HepG2 (cell line): ENCODE measurements at regions of chr2 and their contacts with region 1.

Region 1: DNA sequence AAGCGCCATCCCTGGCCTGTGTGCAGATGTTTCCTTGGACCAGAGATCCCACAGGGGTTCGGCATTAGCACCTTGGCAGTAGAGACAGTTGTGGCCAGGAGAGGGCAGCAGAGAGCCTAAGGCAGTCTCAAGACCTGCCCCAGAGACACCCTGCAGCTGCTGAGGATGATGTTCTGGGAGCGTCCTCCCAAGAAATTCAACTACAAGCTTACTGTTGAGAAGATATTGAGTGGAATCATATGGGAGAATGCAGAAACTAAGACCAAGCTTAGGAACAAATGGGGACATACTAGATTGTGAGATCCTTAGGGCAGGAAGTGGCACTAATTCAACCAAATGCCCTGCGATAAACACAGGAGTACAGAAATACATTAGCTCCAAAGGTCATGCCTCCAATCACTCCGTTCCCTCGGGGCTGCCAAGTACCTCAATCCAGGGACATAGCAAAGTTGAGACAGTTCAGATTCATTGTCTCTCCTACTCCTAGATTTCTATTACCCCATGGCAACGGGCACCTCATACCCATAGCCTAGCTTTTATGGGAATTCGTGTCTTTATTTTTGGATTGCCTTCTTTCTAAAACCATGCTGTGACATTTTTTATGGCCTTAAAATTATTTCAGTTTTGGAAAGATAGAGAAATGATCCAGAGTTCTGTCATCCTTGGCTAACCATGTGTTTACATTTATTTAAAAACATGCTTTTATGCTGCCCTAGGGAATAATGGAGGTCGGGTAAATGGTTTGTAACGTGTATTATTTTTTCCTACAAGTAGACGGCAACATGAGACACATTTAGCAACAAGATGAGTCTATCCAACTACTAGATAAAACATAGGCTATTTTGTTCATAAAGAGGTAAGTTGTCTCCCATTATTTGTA is 2.2 kb upstream of the ERMN start:
- DNase-seq: peak; percentile 44
- ATAC-seq: peak; percentile 100
- H3K4me3 ChIP-seq: no peak overlapping the region
- H3K27ac ChIP-seq: no peak overlapping the region
- H3K4me1 ChIP-seq: no peaks in the 10 kb centered on the region
- H3K27me3 ChIP-seq: no peaks in the 10 kb centered on the region
- CTCF ChIP-seq: peak; percentile 89
- EP300 ChIP-seq: no peak
- POLR2A ChIP-seq: no peak
- RAD21 ChIP-seq: 0 out of 2 replicates have a peak, but pooled peaks have one; percentile 11

Region 2: GRCh38 chr2:157312866-157313486 is 14.9 kb before region 1 on chr2:
- CTCF ChIA-PET with region 1: no interaction called
- POLR2A ChIA-PET with region 1: no interaction called
- in situ Hi-C with region 1: no loop called
- intact Hi-C with region 1: no loop called
- DNase-seq: no peak
- ATAC-seq: no peak
- H3K4me3 ChIP-seq: no peak overlapping the region
- H3K27ac ChIP-seq: no peak overlapping the region
- H3K4me1 ChIP-seq: no peaks in the 10 kb centered on the region
- H3K27me3 ChIP-seq: no peaks in the 10 kb centered on the region
- CTCF ChIP-seq: no peak
- EP300 ChIP-seq: no peak
- POLR2A ChIP-seq: no peak
- RAD21 ChIP-seq: no peak

Region 3: DNA sequence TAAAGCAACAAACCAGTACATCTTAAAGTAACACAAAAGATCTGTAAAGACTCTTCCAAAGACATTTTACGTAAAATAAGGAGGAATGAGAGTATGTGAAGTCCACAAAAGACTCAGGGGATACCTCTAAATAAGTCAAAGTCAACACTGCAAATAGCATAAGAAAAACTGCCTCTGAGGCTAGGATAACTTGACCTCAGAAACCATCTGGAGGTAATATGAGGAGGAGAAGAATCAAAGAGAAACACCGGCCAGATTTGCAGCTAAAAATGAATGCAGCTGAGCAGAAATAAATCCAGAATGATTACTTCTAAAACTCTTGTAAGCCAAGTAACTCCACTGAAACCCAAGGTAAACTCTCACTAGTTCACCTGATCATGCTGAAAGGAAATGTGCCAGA is 50.0 kb after region 1 on chr2:
- CTCF ChIA-PET with region 1: no interaction called
- POLR2A ChIA-PET with region 1: no interaction called
- in situ Hi-C with region 1: no loop called
- intact Hi-C with region 1: loop called (anchors 1 kb)
- DNase-seq: no peak
- ATAC-seq: no peak
- H3K4me3 ChIP-seq: no peak overlapping the region
- H3K27ac ChIP-seq: no peak overlapping the region
- H3K4me1 ChIP-seq: no peaks in the 10 kb centered on the region
- H3K27me3 ChIP-seq: no peaks in the 10 kb centered on the region
- CTCF ChIP-seq: no peak
- EP300 ChIP-seq: no peak
- POLR2A ChIP-seq: no peak
- RAD21 ChIP-seq: no peak

Region 4: DNA sequence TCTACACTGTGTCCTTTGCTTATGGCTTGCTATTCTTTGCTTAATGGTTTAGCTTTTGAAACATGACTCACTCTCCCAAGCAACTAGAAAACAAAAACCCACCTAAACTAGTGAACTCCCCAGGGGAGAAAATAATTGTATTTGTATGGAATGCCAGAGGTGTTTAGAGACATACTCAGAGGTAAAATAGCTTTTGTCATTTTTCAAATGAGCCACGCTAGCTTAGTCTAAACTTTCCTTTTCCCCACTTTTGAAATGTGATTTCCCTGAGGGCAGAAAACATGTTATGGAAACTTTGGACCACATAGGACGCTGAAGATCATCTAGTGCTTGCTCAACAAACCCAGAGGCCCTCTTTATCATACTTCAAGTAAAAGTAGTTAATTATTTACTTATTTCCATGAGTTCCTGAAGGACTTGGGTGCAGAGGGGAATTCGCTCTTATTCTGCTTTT is 132.6 kb after region 1 on chr2:
- CTCF ChIA-PET with region 1: no interaction called
- POLR2A ChIA-PET with region 1: no interaction called
- in situ Hi-C with region 1: no loop called
- intact Hi-C with region 1: loop called (anchors 5 kb)
- DNase-seq: peak; percentile 24
- ATAC-seq: peak; percentile 94
- H3K4me3 ChIP-seq: peak overlapping the region in 1 of 3 experiments; percentile 13; a peak in 1 of 6 replicates
- H3K27ac ChIP-seq: no peak overlapping the region
- H3K4me1 ChIP-seq: peaks cover 17% of the 10 kb centered on the region
- H3K27me3 ChIP-seq: no peaks in the 10 kb centered on the region
- CTCF ChIP-seq: no peak
- EP300 ChIP-seq: peak in 1 of 2 experiments; percentile 43; a peak in 1 of 4 replicates
- POLR2A ChIP-seq: no peak
- RAD21 ChIP-seq: no peak